Activated CD4-positive, alpha-beta T cell treated with anti-CD3 and anti-CD28 coated beads, Interleukin-2, amount 10 ng/mL, durations not matched to agents 24 days and 14 days (primary cell): ENCODE measurements at regions of chr2 and their contacts with region 1.

Region 1: GRCh38 chr2:25131567-25132298 is 36.6 kb downstream of the POMC start:
- DNase-seq: peak; percentile 70
- H3K4me3 Mint-ChIP-seq: peak overlapping the region; percentile 77
- H3K27ac Mint-ChIP-seq: no peak overlapping the region
- H3K4me1 Mint-ChIP-seq: peaks cover 15% of the 10 kb centered on the region
- H3K27me3 Mint-ChIP-seq: peaks cover 57% of the 10 kb centered on the region

Region 2: DNA sequence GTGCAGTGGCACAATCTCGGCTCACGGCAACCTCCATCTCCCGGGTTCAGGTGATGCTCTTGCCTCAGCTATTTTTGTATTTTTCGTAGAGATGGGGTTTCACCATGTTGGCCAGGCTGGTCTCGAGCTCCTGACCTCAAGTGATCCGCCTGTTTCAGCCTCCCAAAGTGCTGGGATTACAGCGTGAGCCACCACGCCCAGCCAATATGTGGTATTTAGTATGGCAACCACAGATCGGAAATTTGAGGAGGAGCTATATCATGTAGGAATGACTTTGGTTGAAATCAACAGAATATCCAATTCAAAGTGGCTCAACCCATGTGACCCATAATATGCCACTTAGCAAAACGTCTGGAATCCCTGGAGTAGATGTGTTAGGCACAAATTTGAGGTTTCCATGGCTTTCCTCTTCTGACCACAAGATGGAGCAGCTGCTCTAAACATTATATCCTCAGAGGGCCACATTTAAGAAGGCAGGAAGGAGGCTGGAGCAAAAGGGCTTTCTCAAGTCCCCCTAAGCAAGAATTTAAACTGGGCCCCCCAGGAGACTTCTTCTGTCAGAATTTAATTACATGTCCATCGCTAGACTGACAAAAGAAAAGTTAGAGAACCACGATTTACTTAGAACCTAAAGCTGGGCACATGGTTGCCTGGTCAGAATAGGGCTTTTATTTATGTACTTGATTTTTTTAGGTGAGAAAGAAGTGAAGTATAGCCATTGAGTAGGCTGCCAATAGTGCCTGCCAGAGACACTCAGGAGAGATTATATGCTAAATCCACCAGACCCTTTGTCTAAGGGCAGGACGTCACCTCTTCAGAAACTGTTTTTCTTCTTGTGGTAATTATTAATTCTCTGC is 721.8 kb before region 1 on chr2:
- intact Hi-C with region 1: loop called (anchors 1 kb)
- DNase-seq: peak; percentile 82
- H3K4me3 Mint-ChIP-seq: no peak overlapping the region
- H3K27ac Mint-ChIP-seq: no peak overlapping the region
- H3K4me1 Mint-ChIP-seq: peaks cover 2% of the 10 kb centered on the region
- H3K27me3 Mint-ChIP-seq: peaks cover 4% of the 10 kb centered on the region

Region 3: GRCh38 chr2:25041928-25042320 is 89.8 kb before region 1 on chr2 and contains the start of gene EFR3B:
- intact Hi-C with region 1: loop called (anchors 5 kb)
- DNase-seq: peak; percentile 96
- H3K4me3 Mint-ChIP-seq: peak within 1 kb of the TSS; percentile 84
- H3K27ac Mint-ChIP-seq: peak within 1 kb of the TSS; percentile 49
- H3K4me1 Mint-ChIP-seq: peaks cover 22% of the 10 kb centered on the region
- H3K27me3 Mint-ChIP-seq: peaks cover 48% of the 10 kb centered on the region
- total RNA-seq, gene EFR3B: 0.09 and 0.12 TPM in 2 replicates

Region 4: DNA sequence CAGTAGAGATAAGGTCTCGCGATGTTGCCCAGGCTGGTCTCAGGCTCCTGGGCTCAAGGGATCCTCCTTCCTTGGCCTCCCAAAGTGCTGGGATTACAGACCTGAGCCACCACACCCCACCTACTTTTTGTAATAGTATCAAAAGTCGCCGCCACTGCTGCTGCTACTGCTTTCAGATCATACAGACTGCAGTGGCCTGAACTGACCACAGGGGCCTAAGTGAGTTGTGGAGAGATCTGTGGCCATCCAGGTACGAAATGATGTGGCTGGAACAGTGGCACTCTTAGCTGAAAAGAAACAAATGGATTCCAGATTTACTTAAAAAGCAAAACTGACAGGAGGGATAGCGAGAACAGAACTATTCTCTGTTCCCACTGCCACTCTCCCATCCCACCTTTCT is 69.5 kb after region 1 on chr2:
- intact Hi-C with region 1: loop called (anchors 10 kb)
- DNase-seq: no peak
- H3K4me3 Mint-ChIP-seq: no peak overlapping the region
- H3K27ac Mint-ChIP-seq: no peak overlapping the region
- H3K4me1 Mint-ChIP-seq: peaks cover 5% of the 10 kb centered on the region
- H3K27me3 Mint-ChIP-seq: peaks cover 13% of the 10 kb centered on the region